HEK293T (cell line): ENCODE measurements at regions of chr19 and their contacts with region 1.

Region 1: GRCh38 chr19:45730389-45731288 is at the start of gene FBXO46:
- DNase-seq: peak; percentile 96

Region 2: GRCh38 chr19:45717166-45717982 is 13.3 kb before region 1 on chr19:
- CTCF ChIA-PET with region 1: interaction called, 3 read pairs
- POLR2A ChIA-PET with region 1: interaction called, 26 read pairs
- DNase-seq: peak; percentile 97

Region 3: GRCh38 chr19:45779231-45780145 is 48.8 kb after region 1 on chr19:
- CTCF ChIA-PET with region 1: no interaction called
- POLR2A ChIA-PET with region 1: no interaction called
- DNase-seq: peak; percentile 95